ENCODE measurements at regions of chr11 and their contacts with region 1.

Region 1: GRCh38 chr11:59207988-59208451 is 4.7 kb downstream of the MPEG1 start:
- DNase-seq: no peak
- ATAC-seq: peak; percentile 64

Region 2: GRCh38 chr11:59283825-59284772 is 76.1 kb after region 1 on chr11:
- intact Hi-C with region 1: loop called (anchors 5 kb)
- DNase-seq: no peak
- ATAC-seq: peak; percentile 52

Region 3: DNA sequence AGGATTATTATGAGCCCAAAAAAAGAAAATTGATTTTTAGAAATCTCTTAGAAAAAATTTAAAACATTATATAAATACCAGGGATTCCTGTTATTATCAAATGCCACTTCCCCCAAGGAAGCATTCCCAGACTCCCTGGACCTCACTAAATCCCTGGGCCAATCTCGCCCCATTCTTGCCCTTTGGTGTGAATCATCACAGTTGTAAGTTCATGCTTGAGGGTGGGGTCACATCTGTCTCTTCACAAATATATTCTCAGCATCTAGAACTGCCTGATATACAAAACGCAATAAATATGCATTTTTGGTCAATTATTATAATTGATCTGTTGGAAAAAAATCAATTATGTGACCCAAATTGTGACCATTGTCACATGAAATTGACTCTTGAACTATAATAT is 240.5 kb after region 1 on chr11:
- intact Hi-C with region 1: no loop called
- DNase-seq: no peak
- ATAC-seq: no peak

Measured in Right ventricle myocardium inferior (tissue), 1 donor.